Right ventricle myocardium inferior (tissue), 1 donor: ENCODE measurements at regions of chr17 and their contacts with region 1.

Region 1: GRCh38 chr17:45640141-45640850 is 143.8 kb upstream of the CRHR1 start:
- DNase-seq: no peak
- ATAC-seq: peak; percentile 59

Region 2: DNA sequence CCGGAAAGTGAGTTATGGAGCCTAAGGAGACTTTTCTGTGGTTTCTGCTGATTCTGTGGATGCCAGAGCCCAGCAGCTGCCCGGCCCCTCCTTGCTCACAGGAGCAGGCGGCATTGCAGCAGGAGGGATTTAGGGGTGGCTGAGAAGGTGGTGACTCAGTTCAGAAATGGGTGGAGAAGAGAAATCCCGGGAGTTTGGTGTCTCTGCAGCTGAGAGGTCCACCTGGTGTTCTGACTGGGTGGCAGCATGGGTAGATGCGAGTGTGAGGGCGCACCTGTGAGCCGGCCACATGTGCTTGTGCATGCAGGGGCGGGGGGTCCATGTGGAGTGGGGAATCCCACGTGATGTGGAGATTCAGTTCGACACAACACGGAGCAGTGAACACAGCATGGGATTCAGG is 188.3 kb after region 1 on chr17:
- intact Hi-C with region 1: loop called (anchors 1 kb)
- DNase-seq: peak; percentile 4
- ATAC-seq: no peak

Region 3: DNA sequence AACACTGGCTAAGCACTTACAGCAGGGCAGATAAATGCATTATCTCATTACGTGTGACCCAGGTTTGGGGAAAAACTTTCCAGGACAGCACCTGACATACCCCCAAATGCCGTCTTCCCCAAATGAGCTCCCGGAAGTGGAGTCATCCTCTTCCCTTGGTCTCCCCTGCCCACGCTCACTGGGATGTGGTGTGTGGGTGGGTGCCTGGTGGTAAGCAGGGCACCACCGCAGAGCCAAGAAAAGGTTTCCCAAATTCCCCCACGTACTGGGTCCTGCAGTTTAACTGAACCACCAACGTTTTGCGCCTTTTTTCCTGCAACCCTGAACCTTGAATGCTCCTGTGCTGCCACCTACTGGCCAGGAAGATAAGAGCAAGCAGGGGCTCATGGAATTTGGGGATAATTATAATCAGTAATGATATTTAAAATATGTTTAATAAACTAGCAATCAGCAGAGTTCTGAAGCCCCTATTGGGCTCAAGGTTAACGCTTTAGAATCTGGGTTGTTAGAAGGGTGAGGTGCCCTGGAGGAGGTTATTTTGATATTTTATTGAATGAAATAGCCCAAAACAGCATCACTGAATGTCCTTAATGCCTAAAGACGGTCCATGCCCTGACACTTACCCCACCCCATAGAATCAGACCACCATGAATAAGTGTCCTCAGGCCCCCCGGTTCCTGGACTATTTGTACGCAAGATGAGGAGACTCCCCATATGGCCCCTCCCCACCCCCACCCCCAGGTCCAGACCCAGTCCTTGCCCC is 212.4 kb after region 1 on chr17:
- intact Hi-C with region 1: loop called (anchors 5 kb)
- DNase-seq: no peak
- ATAC-seq: no peak